ENCODE measurements at regions of chr1 and their contacts with region 1.

Region 1: DNA sequence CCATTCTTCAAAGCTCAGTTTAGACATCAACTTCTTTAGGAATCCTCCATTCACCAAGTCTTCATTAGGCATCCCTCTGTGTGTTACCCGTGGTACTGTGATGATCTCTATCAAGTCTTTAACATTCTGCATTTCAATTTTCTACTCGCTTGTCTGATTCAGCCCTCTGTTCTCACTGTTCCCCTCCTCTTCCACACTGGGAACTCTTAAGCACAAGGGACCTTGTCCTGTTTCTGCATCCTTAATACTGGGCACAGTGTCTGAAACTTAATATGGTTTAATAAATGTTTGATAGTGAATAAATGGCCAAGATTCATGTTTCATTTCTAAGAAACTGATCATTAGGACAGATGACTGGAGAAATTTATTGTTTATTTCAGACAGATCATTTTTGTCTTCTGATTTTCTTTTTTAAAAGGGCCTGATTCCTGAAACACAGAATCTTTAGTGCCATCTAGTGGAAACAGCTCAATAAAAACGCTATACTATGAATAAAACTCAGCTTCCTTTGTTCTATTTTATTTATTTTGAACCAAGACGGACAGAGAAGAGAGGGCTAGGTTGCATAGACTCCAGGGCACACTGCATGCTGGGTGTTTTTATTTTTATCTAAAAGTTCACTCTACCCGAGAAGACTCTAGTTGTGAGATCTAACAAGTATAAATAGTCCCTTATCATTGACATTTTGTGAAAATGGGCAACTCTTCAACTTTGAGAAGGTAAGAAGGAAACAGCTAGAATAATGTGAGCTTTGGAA is 7.0 kb upstream of the TRIM45 start:
- DNase-seq: peak; percentile 28
- CTCF ChIP-seq: peak; percentile 44

Region 2: GRCh38 chr1:116826818-116827606 is 301.5 kb before region 1 on chr1:
- CTCF ChIA-PET with region 1: no interaction called
- POLR2A ChIA-PET with region 1: no interaction called
- DNase-seq: peak; percentile 80
- CTCF ChIP-seq: no peak

Region 3: GRCh38 chr1:117045644-117046043 is 82.9 kb before region 1 on chr1:
- CTCF ChIA-PET with region 1: no interaction called
- POLR2A ChIA-PET with region 1: no interaction called
- DNase-seq: no peak
- CTCF ChIP-seq: no peak

Region 4: DNA sequence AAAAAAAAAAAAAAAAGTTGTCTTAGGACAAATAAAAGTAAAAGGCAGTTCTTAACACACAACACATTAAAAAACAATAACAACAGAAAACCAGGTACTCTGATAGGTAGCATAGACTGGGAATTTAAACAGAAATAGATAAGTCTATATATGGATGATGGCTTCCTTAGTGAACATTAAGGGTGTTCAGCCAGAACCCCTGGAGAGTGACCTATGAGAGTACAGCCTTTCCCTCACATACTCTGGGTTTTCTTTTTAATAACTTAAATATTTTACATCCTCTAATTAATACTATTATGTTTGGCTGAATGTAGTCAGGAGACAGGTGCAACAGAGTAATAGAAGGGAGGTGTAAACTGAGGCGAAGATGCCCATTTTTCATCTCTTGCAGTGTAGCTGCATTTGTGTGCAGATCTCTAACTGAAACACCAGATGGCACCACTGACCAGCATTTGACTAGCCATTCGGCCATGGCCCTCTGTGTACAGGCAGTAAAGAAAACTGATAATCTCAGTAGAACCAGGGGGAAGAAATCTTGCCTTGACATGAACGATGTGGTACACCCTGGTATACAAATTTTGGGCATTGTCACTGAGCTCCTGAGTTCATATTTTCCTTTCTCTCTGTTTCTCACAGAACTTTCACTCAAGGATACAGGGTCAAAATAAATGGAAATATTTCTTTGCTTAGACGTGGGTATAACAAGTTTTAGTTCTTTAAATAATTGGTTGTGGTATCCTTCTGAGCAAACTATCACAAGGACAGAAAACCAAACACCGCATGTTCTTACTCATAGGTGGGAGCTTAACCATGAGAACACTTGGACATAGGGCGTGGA is 60.7 kb before region 1 on chr1:
- CTCF ChIA-PET with region 1: interaction called, 97 read pairs
- POLR2A ChIA-PET with region 1: no interaction called
- DNase-seq: peak; percentile 50
- CTCF ChIP-seq: peak; percentile 68

Region 5: GRCh38 chr1:117093870-117094621 is 34.5 kb before region 1 on chr1:
- CTCF ChIA-PET with region 1: interaction called, 13 read pairs
- POLR2A ChIA-PET with region 1: no interaction called
- DNase-seq: peak; percentile 17
- CTCF ChIP-seq: no peak

Region 6: GRCh38 chr1:117114877-117115276 is 13.6 kb before region 1 on chr1:
- CTCF ChIA-PET with region 1: interaction called, 18 read pairs
- POLR2A ChIA-PET with region 1: no interaction called
- DNase-seq: no peak
- CTCF ChIP-seq: no peak

Region 7: GRCh38 chr1:117142200-117142599 is 13.7 kb after region 1 on chr1:
- CTCF ChIA-PET with region 1: interaction called, 13 read pairs
- POLR2A ChIA-PET with region 1: no interaction called
- DNase-seq: no peak
- CTCF ChIP-seq: no peak

Region 8: DNA sequence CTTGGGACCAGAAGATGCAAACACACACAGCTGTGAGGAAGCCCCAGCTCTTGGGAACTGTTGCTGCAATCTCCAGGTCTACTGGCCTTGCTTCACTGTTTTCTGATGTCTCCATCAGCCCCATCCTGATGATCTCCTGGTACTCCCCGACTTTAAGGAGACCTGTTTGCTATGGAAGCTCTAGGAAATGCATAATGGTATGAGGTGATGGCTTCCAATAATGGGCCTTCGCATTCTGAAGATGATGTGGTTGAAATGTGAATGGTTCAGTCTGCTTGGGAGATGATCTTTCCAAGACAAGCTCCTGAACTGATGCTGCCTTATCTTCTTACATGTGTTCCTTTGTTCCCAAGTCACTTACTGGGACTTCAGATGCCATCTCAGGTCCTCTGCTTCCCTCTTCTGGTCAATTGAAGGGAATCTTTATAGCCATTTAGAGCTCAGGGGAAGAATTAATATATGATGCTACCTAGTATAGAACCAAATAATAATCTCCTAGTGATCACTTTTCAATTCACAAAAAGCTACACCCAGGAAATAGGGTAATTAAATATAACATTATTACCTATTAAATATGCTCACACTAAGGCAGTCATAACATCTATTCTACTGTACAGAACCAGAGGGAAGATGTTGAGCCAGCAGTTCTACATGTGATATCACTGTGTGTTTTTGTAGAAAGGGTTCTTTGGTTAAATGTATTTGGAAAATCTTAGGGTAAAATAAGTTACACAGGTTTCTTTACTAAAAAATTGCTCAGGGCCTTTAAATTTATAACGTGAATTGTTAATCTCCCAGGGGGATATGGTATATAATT is 156.1 kb after region 1 on chr1:
- CTCF ChIA-PET with region 1: interaction called, 17 read pairs
- POLR2A ChIA-PET with region 1: no interaction called
- DNase-seq: no peak
- CTCF ChIP-seq: peak; percentile 41

Region 9: DNA sequence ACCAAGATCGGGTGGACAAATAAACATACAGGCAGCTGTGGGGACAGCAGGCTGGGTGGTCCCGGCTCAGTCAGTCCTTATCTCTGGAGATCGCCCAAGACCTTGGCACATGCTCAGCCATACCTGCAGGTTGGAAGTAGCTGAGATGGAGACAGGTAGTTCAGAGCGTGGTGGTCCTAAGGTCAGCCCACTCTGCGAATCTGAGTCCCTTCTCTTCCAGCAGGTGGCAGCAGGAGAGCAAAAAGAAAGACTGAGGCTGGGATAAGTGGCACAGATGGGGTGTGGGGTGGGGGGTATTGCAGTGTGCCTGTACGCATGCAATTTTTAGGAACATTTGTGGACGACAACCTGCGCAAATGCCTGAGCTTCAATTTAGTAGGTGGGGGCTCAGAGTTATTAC is 582.2 kb after region 1 on chr1:
- CTCF ChIA-PET with region 1: no interaction called
- POLR2A ChIA-PET with region 1: no interaction called
- DNase-seq: no peak
- CTCF ChIP-seq: peak; percentile 22

Measured in GM10248 (cell line).